ENCODE measurements at regions of chr11 and their contacts with region 1.

Region 1: GRCh38 chr11:62841361-62842184 is 2.2 kb upstream of the WDR74 start:
- DNase-seq: peak; percentile 88 to 92 (median 90)
- H3K4me3 ChIP-seq: peak overlapping the region; percentile 74 to 86
- H3K4me3 Mint-ChIP-seq: no peak overlapping the region
- H3K27ac ChIP-seq: peak overlapping the region; percentile 98
- H3K27ac Mint-ChIP-seq: no peak overlapping the region
- H3K4me1 ChIP-seq: peaks cover 32% of the 10 kb centered on the region
- H3K4me1 Mint-ChIP-seq: peaks cover 10 to 34% (median 21%) of the 10 kb centered on the region in 4 donors
- H3K27me3 ChIP-seq: no peaks in the 10 kb centered on the region
- H3K27me3 Mint-ChIP-seq: no peaks in the 10 kb centered on the region

Region 2: GRCh38 chr11:62601394-62602140 is 240.0 kb before region 1 on chr11 and contains the start of gene MTA2:
- CTCF ChIA-PET with region 1: no interaction called
- POLR2A ChIA-PET with region 1: interaction called, 49 read pairs
- intact Hi-C with region 1: no loop called
- DNase-seq: peak; percentile 99 to 100 (median 100)
- H3K4me3 ChIP-seq: peak within 1 kb of the TSS; percentile 71 to 82
- H3K4me3 Mint-ChIP-seq: peak within 1 kb of the TSS; percentile 91 to 99 (median 96)
- H3K27ac ChIP-seq: peak within 1 kb of the TSS; percentile 91
- H3K27ac Mint-ChIP-seq: peak within 1 kb of the TSS; percentile 90 to 99 (median 98)
- H3K4me1 ChIP-seq: peaks cover 35% of the 10 kb centered on the region
- H3K4me1 Mint-ChIP-seq: peaks cover 33 to 60% (median 46%) of the 10 kb centered on the region in 4 donors
- H3K27me3 ChIP-seq: no peaks in the 10 kb centered on the region
- H3K27me3 Mint-ChIP-seq: no peaks in the 10 kb centered on the region
- total RNA-seq, gene MTA2: 207 to 210 TPM

Region 3: DNA sequence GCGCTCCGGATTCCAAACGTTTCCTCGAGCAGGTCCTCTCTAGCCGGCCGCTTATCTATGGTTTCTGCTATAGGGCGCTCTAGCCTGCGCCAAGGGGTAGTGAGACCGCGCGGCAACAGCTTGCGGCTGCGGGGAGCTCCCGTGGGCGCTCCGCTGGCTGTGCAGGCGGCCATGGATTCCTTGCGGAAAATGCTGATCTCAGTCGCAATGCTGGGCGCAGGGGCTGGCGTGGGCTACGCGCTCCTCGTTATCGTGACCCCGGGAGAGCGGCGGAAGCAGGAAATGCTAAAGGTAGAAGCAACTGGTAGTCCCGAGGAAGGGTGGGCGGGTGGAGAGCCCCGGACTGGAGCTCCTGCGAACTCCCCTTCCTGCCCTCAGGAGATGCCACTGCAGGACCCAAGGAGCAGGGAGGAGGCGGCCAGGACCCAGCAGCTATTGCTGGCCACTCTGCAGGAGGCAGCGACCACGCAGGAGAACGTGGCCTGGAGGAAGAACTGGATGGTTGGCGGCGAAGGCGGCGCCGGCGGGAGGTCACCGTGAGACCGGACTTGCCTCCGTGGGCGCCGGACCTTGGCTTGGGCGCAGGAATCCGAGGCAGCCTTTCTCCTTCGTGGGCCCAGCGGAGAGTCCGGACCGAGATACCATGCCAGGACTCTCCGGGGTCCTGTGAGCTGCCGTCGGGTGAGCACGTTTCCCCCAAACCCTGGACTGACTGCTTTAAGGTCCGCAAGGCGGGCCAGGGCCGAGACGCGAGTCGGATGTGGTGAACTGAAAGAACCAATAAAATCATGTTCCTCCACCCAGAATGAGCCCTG is 169.8 kb before region 1 on chr11 and contains the starts of genes LBHD1 and UQCC3:
- CTCF ChIA-PET with region 1: no interaction called
- POLR2A ChIA-PET with region 1: interaction called, 28 read pairs
- intact Hi-C with region 1: no loop called
- DNase-seq: peak; percentile 68 to 80 (median 75)
- H3K4me3 ChIP-seq: peak within 1 kb of the TSS; percentile 91 to 97
- H3K4me3 Mint-ChIP-seq: peak within 1 kb of the TSS; percentile 93 to 99 (median 99)
- H3K27ac ChIP-seq: peak within 1 kb of the TSS; percentile 74
- H3K27ac Mint-ChIP-seq: peak within 1 kb of the TSS; percentile 89 to 98 (median 97)
- H3K4me1 ChIP-seq: peaks cover 55% of the 10 kb centered on the region
- H3K4me1 Mint-ChIP-seq: peaks cover 14 to 74% (median 43%) of the 10 kb centered on the region in 4 donors
- H3K27me3 ChIP-seq: no peaks in the 10 kb centered on the region
- H3K27me3 Mint-ChIP-seq: no peaks in the 10 kb centered on the region
- total RNA-seq, gene LBHD1: 26.7 to 28.6 TPM
- total RNA-seq, gene UQCC3: 7.2 to 8.5 TPM

Region 4: GRCh38 chr11:62771144-62772021 is 70.2 kb before region 1 on chr11 and contains the start of gene TAF6L:
- CTCF ChIA-PET with region 1: no interaction called
- POLR2A ChIA-PET with region 1: interaction called, 74 read pairs
- intact Hi-C with region 1: no loop called
- DNase-seq: peak; percentile 86 to 92 (median 88)
- H3K4me3 ChIP-seq: peak within 1 kb of the TSS; percentile 67 to 83
- H3K4me3 Mint-ChIP-seq: peak within 1 kb of the TSS; percentile 87 to 97 (median 92)
- H3K27ac ChIP-seq: peak within 1 kb of the TSS; percentile 82
- H3K27ac Mint-ChIP-seq: peak within 1 kb of the TSS; percentile 92 to 99 (median 97)
- H3K4me1 ChIP-seq: peaks cover 24% of the 10 kb centered on the region
- H3K4me1 Mint-ChIP-seq: peaks cover 14 to 32% (median 22%) of the 10 kb centered on the region in 4 donors
- H3K27me3 ChIP-seq: no peaks in the 10 kb centered on the region
- H3K27me3 Mint-ChIP-seq: no peaks in the 10 kb centered on the region
- total RNA-seq, gene TAF6L: 26.3 to 34.0 TPM

Region 5: DNA sequence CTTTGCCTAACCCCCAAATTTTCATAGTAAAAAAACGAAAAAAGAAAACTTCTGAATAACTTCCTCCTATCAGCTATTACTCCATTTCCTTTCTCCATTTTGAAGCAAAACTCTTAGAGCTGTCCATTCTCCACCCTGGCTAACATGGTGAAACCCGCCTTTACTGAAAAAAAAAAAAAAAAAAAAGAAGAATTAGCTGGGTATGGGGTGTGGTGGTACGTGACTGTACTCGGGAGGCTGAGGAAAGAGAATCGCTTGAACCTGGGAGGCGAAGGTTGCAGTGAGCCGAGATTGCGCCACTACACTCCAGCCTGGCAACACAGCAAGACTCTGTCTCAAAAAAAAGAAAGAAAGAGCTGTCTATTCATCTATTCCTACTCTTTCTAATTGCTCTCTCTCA is 25.0 kb before region 1 on chr11:
- CTCF ChIA-PET with region 1: no interaction called
- POLR2A ChIA-PET with region 1: interaction called, 11 read pairs
- intact Hi-C with region 1: no loop called
- DNase-seq: no peak
- H3K4me3 ChIP-seq: no peak overlapping the region
- H3K4me3 Mint-ChIP-seq: no peak overlapping the region
- H3K27ac ChIP-seq: no peak overlapping the region
- H3K27ac Mint-ChIP-seq: no peak overlapping the region
- H3K4me1 ChIP-seq: no peaks in the 10 kb centered on the region
- H3K4me1 Mint-ChIP-seq: peaks cover 0 to 3% (median 0%) of the 10 kb centered on the region in 4 donors
- H3K27me3 ChIP-seq: no peaks in the 10 kb centered on the region
- H3K27me3 Mint-ChIP-seq: no peaks in the 10 kb centered on the region

Region 6: GRCh38 chr11:62860835-62861563 is 19.4 kb after region 1 on chr11:
- CTCF ChIA-PET with region 1: interaction called, 9 read pairs
- POLR2A ChIA-PET with region 1: interaction called, 667 read pairs
- intact Hi-C with region 1: no loop called
- DNase-seq: no peak
- H3K4me3 ChIP-seq: no peak overlapping the region
- H3K4me3 Mint-ChIP-seq: no peak overlapping the region
- H3K27ac ChIP-seq: no peak overlapping the region
- H3K27ac Mint-ChIP-seq: peak overlapping the region in 2 of 7 donors; percentile 37 to 72
- H3K4me1 ChIP-seq: peaks cover 23% of the 10 kb centered on the region
- H3K4me1 Mint-ChIP-seq: peaks cover 11 to 25% (median 18%) of the 10 kb centered on the region in 4 donors
- H3K27me3 ChIP-seq: no peaks in the 10 kb centered on the region
- H3K27me3 Mint-ChIP-seq: no peaks in the 10 kb centered on the region

Measured in CD4-positive, alpha-beta memory T cell (primary cell).